Motor neuron (in vitro differentiated cells): ENCODE measurements at regions of chr5 and their contacts with region 1.

Region 1: DNA sequence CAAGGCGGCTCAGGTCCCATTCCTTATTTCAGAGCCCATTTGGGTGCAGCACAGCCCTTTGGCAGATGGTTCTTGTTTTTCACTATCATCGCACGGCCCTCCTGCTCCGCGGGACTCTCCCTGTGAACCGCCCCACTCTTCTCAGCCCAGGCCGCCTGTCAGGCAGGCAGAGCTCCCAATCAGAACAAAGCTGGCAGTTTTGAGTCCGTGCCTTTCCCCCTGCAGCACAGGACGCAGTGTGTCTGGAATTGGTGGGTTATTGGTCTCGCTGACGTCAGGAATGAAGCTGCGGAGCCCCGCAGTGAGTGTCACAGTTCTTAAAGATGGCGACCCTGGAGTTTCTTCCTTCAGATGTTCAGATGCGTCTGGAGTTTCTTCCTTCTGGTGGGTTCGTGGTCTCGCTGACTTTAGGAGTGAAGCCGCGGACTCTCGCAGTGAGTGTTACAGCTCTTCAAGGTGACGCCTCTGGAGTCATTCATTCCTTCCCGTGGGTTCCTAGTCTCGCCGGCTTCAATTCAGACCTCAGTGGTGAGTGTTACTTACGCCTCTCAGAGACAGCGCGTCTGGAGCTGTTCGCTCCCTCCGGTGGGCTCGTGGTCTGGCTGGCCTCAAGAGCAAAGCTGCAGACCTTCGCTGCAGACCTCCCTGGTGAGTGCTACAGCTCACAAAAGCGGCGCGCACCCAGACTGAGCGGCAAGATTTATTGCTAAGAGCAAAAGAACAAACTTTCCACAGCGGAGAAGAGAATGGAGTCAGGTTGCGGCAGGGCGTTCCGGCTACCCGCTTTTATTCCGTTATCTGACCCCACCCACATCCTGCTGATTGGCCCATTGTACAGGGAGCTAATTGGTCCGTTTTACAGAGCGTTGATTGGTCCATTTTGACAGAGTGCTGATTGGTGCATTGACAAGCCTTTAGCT is 7.5 kb downstream of the ZDHHC11B start:
- ATAC-seq: peak in 3 of 8 experiments; percentile 15 to 69 (median 37)
- H3K4me3 ChIP-seq: no peak overlapping the region
- H3K27ac ChIP-seq: no peak overlapping the region
- H3K4me1 ChIP-seq: no peaks in the 10 kb centered on the region

Region 2: DNA sequence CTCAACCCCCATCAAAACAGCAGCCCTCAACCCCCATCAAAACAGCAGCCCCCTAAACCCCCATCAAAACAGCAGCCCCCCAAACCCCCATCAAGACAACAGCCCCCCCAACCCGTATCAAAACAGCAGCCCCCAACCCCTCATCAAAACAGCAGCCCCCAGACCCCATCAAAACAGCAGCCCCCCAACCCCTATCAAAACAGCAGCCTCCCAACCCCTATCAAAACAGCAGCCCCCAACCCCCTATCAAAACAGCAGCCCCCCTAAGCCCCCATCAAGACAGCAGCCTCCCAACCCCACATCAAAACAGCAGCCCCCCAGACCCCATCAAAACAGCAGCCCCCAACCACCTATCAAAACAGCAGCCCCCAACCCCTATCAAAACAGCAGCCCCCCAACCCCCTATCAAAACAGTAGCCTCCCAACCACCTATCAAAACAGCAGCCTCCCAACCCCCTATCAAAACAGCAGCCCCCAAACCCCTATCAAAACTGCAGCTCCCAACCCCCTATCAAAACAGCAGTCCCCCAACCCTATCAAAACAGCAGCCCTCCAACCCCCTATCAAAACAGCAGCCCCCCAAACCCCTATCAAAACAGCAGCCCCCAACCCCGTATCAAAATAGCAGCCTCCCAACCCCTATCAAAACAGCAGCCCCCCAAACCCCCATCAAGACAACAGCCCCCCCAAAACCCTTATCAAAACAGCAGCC is 85.1 kb before region 1 on chr5:
- in situ Hi-C with region 1: loop called in 1 of 9 experiments (anchors 10 kb)
- ATAC-seq: no peak
- H3K4me3 ChIP-seq: peak overlapping the region in 4 of 5 donors; percentile 24 to 59 (median 58)
- H3K27ac ChIP-seq: no peak overlapping the region
- H3K4me1 ChIP-seq: no peaks in the 10 kb centered on the region

Region 3: GRCh38 chr5:989961-990530 is 213.0 kb after region 1 on chr5:
- in situ Hi-C with region 1: no loop called
- ATAC-seq: peak in 5 of 8 experiments; percentile 58 to 78 (median 68)
- H3K4me3 ChIP-seq: no peak overlapping the region
- H3K27ac ChIP-seq: peak overlapping the region in 1 of 2 donors; percentile 5
- H3K4me1 ChIP-seq: peaks cover 12 to 39% of the 10 kb centered on the region in 2 donors